Pancreas (tissue), 10 donors: ENCODE measurements at regions of chr14 and their contacts with region 1.

Region 1: GRCh38 chr14:33799705-33800570 is 150.9 kb downstream of the EGLN3 start:
- DNase-seq: peak in 4 of 6 donors; percentile 15 to 64 (median 44)
- ATAC-seq: peak in 3 of 4 donors; percentile 38 to 59 (median 45)
- H3K4me3 ChIP-seq: peak overlapping the region in 1 of 4 donors; percentile 26
- H3K27ac ChIP-seq: no peak overlapping the region
- H3K4me1 ChIP-seq: no peaks in the 10 kb centered on the region
- H3K27me3 ChIP-seq: peaks cover 0 to 17% (median 2%) of the 10 kb centered on the region in 4 donors
- CTCF ChIP-seq: no peak

Region 2: GRCh38 chr14:32576088-32576795 is 1223.7 kb before region 1 on chr14:
- intact Hi-C with region 1: loop called in 2 of 3 experiments (anchors 5 to 10 kb)
- DNase-seq: peak in 3 of 6 donors; percentile 18 to 56 (median 21)
- ATAC-seq: peak; percentile 78 to 98 (median 96)
- H3K4me3 ChIP-seq: no peak overlapping the region
- H3K27ac ChIP-seq: no peak overlapping the region
- H3K4me1 ChIP-seq: peaks cover 0 to 4% (median 0%) of the 10 kb centered on the region in 3 donors
- H3K27me3 ChIP-seq: no peaks in the 10 kb centered on the region
- CTCF ChIP-seq: peak; percentile 86 to 96 (median 90)

Region 3: DNA sequence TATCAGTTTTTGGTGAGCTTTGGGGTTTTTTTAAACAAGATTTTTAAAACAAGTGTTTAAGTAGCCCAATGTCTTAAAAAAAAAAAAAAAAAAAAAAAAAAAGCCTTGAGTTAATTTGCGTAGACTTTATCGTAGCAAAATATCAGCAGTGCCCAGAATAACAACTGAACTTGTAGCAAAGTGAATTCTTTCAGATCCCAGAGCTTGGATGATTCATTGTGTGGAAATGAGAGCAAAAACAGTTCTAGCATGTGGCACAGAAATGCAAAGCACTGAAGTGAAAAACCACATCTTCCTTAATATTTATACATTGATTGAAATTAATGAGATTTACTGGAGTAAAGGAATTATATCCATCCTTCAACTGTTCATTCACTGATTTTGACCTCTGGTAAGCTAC is 107.2 kb before region 1 on chr14:
- intact Hi-C with region 1: no loop called
- DNase-seq: no peak
- ATAC-seq: no peak
- H3K4me3 ChIP-seq: no peak overlapping the region
- H3K27ac ChIP-seq: no peak overlapping the region
- H3K4me1 ChIP-seq: no peaks in the 10 kb centered on the region
- H3K27me3 ChIP-seq: no peaks in the 10 kb centered on the region
- CTCF ChIP-seq: no peak